Caco-2 (cell line): ENCODE measurements at regions of chr10 and their contacts with region 1.

Region 1: DNA sequence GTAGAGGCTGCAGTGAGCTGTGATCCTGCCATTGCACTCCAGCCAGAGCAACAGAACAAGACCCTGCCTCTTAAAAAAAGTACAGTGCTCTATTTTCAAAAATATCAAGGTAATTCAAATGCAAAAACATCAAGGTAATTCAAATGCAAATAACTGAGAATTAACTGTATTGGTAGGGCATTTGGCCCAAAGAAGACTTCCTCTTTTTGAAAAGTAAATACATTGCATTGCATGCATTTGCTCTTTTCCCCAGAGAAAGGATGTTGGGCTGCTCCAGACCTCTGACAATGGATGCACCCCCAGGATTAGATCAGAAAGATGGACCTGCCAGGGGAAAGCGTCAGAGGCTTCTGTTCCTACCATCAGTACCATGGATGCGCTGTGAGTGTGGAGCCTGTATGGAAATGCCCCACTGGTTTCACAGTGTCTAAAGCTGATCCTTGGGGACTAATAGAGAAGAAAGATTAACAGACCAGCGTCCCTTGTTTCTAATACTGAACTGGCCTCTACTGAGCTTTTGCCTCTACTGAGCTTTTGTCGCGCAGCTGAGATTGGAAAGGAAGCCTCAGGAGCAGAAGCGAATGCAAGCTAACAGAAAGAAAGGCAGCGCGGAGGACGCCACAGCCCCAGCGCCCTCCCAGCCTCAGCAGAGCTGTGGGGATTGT is 93.5 kb upstream of the LYZL2 start:
- DNase-seq: no peak
- H3K4me3 ChIP-seq: no peak overlapping the region
- H3K4me3 Mint-ChIP-seq: no peak overlapping the region
- H3K27ac Mint-ChIP-seq: no peak overlapping the region
- H3K4me1 ChIP-seq: no peaks in the 10 kb centered on the region; the same call in 1 of the 2 replicates
- H3K4me1 Mint-ChIP-seq: no peaks in the 10 kb centered on the region
- H3K27me3 ChIP-seq: no peaks in the 10 kb centered on the region
- H3K27me3 Mint-ChIP-seq: peaks cover 13% of the 10 kb centered on the region
- CTCF ChIP-seq: no peak

Region 2: GRCh38 chr10:30687698-30688219 is 35.3 kb before region 1 on chr10:
- CTCF ChIA-PET with region 1: no interaction called
- POLR2A ChIA-PET with region 1: no interaction called
- intact Hi-C with region 1: no loop called
- DNase-seq: peak; percentile 82 to 92
- H3K4me3 ChIP-seq: no peak overlapping the region
- H3K4me3 Mint-ChIP-seq: no peak overlapping the region
- H3K27ac Mint-ChIP-seq: no peak overlapping the region
- H3K4me1 ChIP-seq: no peaks in the 10 kb centered on the region; the same call in 1 of the 2 replicates
- H3K4me1 Mint-ChIP-seq: no peaks in the 10 kb centered on the region
- H3K27me3 ChIP-seq: no peaks in the 10 kb centered on the region; the same call in 1 of the 2 replicates
- H3K27me3 Mint-ChIP-seq: peaks cover 28% of the 10 kb centered on the region
- CTCF ChIP-seq: peak; percentile 90 to 98

Region 3: DNA sequence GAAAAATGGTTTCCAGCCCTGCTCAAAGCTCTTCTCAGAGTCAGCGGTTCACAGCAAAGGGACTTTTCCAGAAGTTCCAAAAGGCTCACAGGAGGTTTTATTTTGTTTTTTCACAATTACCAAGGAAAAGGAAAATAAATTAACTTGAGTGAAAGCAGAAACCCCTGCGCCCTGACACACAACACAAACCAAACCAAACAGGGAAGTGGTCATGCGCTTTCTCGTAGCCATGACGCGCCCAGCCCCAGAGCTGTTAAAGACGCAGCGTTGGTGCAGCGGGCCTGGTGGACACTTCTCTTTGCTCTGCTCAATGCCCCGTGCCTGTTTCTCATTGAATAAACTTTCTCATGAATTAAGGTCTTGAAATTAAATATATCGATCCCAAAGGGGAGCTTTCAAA is 40.8 kb after region 1 on chr10:
- CTCF ChIA-PET with region 1: no interaction called
- POLR2A ChIA-PET with region 1: no interaction called
- intact Hi-C with region 1: no loop called
- DNase-seq: no peak
- H3K4me3 ChIP-seq: no peak overlapping the region
- H3K4me3 Mint-ChIP-seq: no peak overlapping the region
- H3K27ac Mint-ChIP-seq: no peak overlapping the region
- H3K4me1 ChIP-seq: no peaks in the 10 kb centered on the region
- H3K4me1 Mint-ChIP-seq: no peaks in the 10 kb centered on the region
- H3K27me3 ChIP-seq: no peaks in the 10 kb centered on the region
- H3K27me3 Mint-ChIP-seq: peaks cover 11% of the 10 kb centered on the region
- CTCF ChIP-seq: no peak

Region 4: GRCh38 chr10:30775779-30776591 is 52.9 kb after region 1 on chr10:
- CTCF ChIA-PET with region 1: no interaction called
- POLR2A ChIA-PET with region 1: no interaction called
- intact Hi-C with region 1: no loop called
- DNase-seq: no peak
- H3K4me3 ChIP-seq: no peak overlapping the region
- H3K4me3 Mint-ChIP-seq: no peak overlapping the region
- H3K27ac Mint-ChIP-seq: no peak overlapping the region
- H3K4me1 ChIP-seq: no peaks in the 10 kb centered on the region
- H3K4me1 Mint-ChIP-seq: no peaks in the 10 kb centered on the region
- H3K27me3 ChIP-seq: no peaks in the 10 kb centered on the region
- H3K27me3 Mint-ChIP-seq: peaks cover 12% of the 10 kb centered on the region
- CTCF ChIP-seq: no peak

Region 5: DNA sequence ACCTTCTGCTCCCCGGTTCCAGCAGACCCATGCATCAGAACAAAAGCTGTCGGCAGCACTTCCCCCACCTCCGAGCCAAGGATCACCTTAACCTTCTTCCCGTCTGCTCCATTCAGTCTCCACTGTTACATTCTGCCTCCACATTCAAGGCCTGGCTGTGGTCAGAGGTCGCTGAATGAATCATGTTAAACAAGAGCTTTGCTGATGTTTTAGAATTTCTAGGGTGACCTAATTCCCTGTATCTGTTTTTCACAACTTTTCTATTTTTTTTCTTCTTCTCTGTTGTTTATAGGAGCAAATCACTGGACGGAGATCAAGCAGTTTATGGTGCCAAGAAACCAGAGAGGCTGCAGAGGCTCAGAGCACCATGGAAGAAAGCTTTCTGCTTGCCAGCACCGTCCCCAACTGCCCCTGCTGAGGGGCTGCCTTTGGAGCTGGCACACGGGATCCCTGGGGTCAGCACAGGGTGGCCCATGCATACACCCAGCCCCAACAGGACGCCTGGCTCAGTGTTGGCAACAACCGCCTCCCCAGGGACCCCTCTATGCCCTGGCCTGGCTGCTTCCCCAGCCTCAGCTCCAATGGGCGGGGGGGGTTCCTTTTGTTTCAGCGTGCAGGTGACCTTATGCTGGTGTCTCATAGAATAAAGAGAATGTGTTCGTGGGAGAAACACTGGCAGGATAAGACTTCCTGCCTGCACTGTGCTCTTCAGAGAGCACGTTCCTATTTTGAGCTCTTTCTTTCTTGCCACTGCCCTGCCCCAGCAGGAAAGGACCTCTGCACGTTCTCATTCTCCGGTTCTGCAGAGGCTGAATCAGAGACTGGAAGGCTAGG is 89.1 kb after region 1 on chr10:
- CTCF ChIA-PET with region 1: no interaction called
- POLR2A ChIA-PET with region 1: no interaction called
- intact Hi-C with region 1: no loop called
- DNase-seq: no peak
- H3K4me3 ChIP-seq: no peak overlapping the region
- H3K4me3 Mint-ChIP-seq: no peak overlapping the region
- H3K27ac Mint-ChIP-seq: no peak overlapping the region
- H3K4me1 ChIP-seq: no peaks in the 10 kb centered on the region
- H3K4me1 Mint-ChIP-seq: no peaks in the 10 kb centered on the region
- H3K27me3 ChIP-seq: no peaks in the 10 kb centered on the region
- H3K27me3 Mint-ChIP-seq: peaks cover 3% of the 10 kb centered on the region
- CTCF ChIP-seq: no peak

Region 6: GRCh38 chr10:31467796-31468535 is 744.9 kb after region 1 on chr10:
- CTCF ChIA-PET with region 1: no interaction called
- POLR2A ChIA-PET with region 1: no interaction called
- intact Hi-C with region 1: loop called (anchors 10 kb)
- DNase-seq: peak; percentile 47 to 61
- H3K4me3 ChIP-seq: no peak overlapping the region
- H3K4me3 Mint-ChIP-seq: no peak overlapping the region
- H3K27ac Mint-ChIP-seq: no peak overlapping the region
- H3K4me1 ChIP-seq: no peaks in the 10 kb centered on the region
- H3K4me1 Mint-ChIP-seq: no peaks in the 10 kb centered on the region
- H3K27me3 ChIP-seq: no peaks in the 10 kb centered on the region
- H3K27me3 Mint-ChIP-seq: no peaks in the 10 kb centered on the region
- CTCF ChIP-seq: peak; percentile 67 to 72

Region 7: GRCh38 chr10:31770307-31770902 is 1047.3 kb after region 1 on chr10:
- CTCF ChIA-PET with region 1: no interaction called
- POLR2A ChIA-PET with region 1: no interaction called
- intact Hi-C with region 1: loop called (anchors 10 kb)
- DNase-seq: peak in 1 of 2 experiments; percentile 68
- H3K4me3 ChIP-seq: no peak overlapping the region
- H3K4me3 Mint-ChIP-seq: no peak overlapping the region
- H3K27ac Mint-ChIP-seq: no peak overlapping the region
- H3K4me1 ChIP-seq: no peaks in the 10 kb centered on the region
- H3K4me1 Mint-ChIP-seq: no peaks in the 10 kb centered on the region
- H3K27me3 ChIP-seq: no peaks in the 10 kb centered on the region
- H3K27me3 Mint-ChIP-seq: no peaks in the 10 kb centered on the region
- CTCF ChIP-seq: peak; percentile 79 to 94

Region 8: DNA sequence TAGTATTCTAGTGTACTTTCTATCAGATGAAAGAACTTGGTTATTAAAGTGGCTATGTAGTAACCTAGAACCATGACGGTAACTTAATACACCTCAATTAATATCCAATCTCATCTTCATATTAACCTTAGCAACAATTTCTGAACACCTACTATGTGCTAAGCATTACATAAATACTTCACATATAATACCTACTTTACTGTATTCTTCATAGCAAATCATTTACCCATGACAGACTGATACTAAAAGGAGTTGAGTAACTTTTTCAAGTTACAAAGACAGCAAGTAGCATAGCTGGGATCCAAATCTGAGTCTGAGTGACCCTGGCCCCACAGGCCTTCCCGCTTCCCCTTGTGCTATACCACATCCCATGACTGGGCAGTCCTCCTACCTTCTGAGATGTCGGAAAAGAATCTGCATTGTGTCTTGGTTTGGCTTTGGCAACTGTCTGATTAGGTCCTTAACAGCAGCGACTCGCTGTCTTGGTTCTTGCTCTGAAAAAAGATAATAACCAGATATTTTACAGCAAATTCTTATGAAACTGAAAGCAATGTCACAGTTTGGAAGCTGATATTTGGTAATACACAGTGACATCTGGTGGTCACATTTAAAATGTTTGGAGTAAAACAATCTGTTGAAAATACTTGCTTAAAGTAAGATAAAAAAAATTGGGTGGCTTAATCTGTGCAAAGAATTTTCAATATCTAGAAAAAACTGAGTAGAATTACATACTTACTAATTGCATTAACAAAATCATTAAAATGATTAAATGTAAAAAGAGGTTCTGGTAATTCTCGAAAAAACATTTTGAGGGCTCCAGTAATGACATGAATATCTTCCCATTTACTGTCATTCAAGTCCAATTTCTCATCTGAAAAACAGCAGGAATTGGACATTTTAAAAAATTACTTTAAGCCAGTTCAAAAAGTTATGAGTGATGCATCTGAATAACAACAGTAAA is 1085.5 kb after region 1 on chr10:
- CTCF ChIA-PET with region 1: no interaction called
- POLR2A ChIA-PET with region 1: no interaction called
- intact Hi-C with region 1: loop called (anchors 5 kb)
- DNase-seq: peak in 1 of 2 experiments; percentile 42
- H3K4me3 ChIP-seq: no peak overlapping the region
- H3K4me3 Mint-ChIP-seq: no peak overlapping the region
- H3K27ac Mint-ChIP-seq: no peak overlapping the region
- H3K4me1 ChIP-seq: no peaks in the 10 kb centered on the region
- H3K4me1 Mint-ChIP-seq: no peaks in the 10 kb centered on the region
- H3K27me3 ChIP-seq: no peaks in the 10 kb centered on the region
- H3K27me3 Mint-ChIP-seq: no peaks in the 10 kb centered on the region
- CTCF ChIP-seq: peak; percentile 52 to 69